Naive thymus-derived CD4-positive, alpha-beta T cell (primary cell): ENCODE measurements at regions of chr11 and their contacts with region 1.

Region 1: GRCh38 chr11:12813371-12814225 is 139.4 kb downstream of the TEAD1 start:
- DNase-seq: no peak
- ATAC-seq: no peak
- H3K4me3 ChIP-seq: no peak overlapping the region
- H3K4me3 Mint-ChIP-seq: peak overlapping the region in 1 of 10 donors; percentile 5
- H3K27ac ChIP-seq: no peak overlapping the region
- H3K27ac Mint-ChIP-seq: no peak overlapping the region
- H3K4me1 ChIP-seq: no peaks in the 10 kb centered on the region
- H3K4me1 Mint-ChIP-seq: peaks cover 0 to 62% (median 5%) of the 10 kb centered on the region in 7 donors
- H3K27me3 ChIP-seq: no peaks in the 10 kb centered on the region
- H3K27me3 Mint-ChIP-seq: peaks cover 28 to 40% (median 32%) of the 10 kb centered on the region in 5 donors

Region 2: DNA sequence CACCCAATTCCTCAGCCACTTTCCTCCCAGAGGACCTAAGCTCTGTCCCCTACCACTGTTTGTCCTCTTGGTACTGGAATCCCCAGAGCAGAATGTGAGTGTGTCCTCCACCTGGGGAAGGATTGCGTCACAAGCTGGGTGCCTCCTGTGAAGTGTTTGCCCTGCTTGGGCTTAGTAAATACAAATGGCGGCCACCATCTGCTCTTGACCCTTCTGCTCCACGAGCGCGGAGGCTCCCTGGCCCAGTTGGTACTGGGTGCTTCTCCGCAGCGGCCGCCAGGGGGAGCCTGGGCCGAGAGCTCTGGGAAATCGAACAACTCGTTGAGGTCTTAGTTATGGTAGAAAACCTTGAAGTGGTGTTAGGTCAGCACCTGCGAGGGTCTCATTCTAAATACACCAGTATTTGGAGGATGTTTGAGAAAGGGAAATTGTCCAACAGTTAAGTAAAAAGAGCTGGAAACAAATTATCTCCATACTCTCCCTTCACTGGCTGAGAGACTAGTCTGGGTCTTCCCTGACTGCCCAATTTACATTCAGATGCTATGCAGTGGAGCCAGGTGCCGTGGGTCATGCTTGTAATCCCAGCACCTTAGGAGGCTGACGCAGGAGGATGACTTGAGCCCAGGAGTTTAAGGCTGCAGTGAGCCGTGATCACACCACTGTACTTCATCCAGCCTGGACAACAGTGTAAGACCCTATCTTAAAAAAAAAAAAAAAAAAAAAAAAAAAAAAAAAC is 214.0 kb before region 1 on chr11:
- CTCF ChIA-PET with region 1: no interaction called
- POLR2A ChIA-PET with region 1: no interaction called
- intact Hi-C with region 1: loop called in 1 of 2 experiments (anchors 2 kb)
- DNase-seq: peak in 5 of 9 donors; percentile 8 to 57 (median 13)
- ATAC-seq: peak; percentile 26
- H3K4me3 ChIP-seq: no peak overlapping the region
- H3K4me3 Mint-ChIP-seq: no peak overlapping the region
- H3K27ac ChIP-seq: no peak overlapping the region
- H3K27ac Mint-ChIP-seq: peak overlapping the region in 1 of 9 donors; percentile 25
- H3K4me1 ChIP-seq: peaks cover 0 to 17% of the 10 kb centered on the region in 2 donors
- H3K4me1 Mint-ChIP-seq: peaks cover 3 to 25% (median 18%) of the 10 kb centered on the region in 7 donors
- H3K27me3 ChIP-seq: no peaks in the 10 kb centered on the region
- H3K27me3 Mint-ChIP-seq: peaks cover 16 to 45% (median 28%) of the 10 kb centered on the region in 5 donors

Region 3: GRCh38 chr11:12673924-12674570 is 139.6 kb before region 1 on chr11 and contains the start of gene TEAD1:
- CTCF ChIA-PET with region 1: no interaction called
- POLR2A ChIA-PET with region 1: no interaction called
- intact Hi-C with region 1: loop called in 1 of 2 experiments (anchors 2 kb)
- DNase-seq: peak; percentile 74 to 97 (median 81)
- ATAC-seq: peak; percentile 89
- H3K4me3 ChIP-seq: peak within 1 kb of the TSS; percentile 70
- H3K4me3 Mint-ChIP-seq: peak within 1 kb of the TSS; percentile 80 to 91 (median 85)
- H3K27ac ChIP-seq: no peak within 1 kb of the TSS
- H3K27ac Mint-ChIP-seq: peak within 1 kb of the TSS in 4 of 9 donors; percentile 29 to 77 (median 55)
- H3K4me1 ChIP-seq: peaks cover 5 to 6% of the 10 kb centered on the region in 2 donors
- H3K4me1 Mint-ChIP-seq: peaks cover 6 to 24% (median 9%) of the 10 kb centered on the region in 7 donors
- H3K27me3 ChIP-seq: peaks cover 5 to 50% of the 10 kb centered on the region in 2 donors
- H3K27me3 Mint-ChIP-seq: peaks cover 70 to 80% (median 75%) of the 10 kb centered on the region in 5 donors
- total RNA-seq, gene TEAD1: 0.07 to 0.22 TPM in 2 of 5 experiments, not detected in the others

Region 4: GRCh38 chr11:12717851-12718291 is 95.7 kb before region 1 on chr11:
- CTCF ChIA-PET with region 1: no interaction called
- POLR2A ChIA-PET with region 1: no interaction called
- intact Hi-C with region 1: no loop called
- DNase-seq: peak in 8 of 9 donors; percentile 43 to 78 (median 76)
- ATAC-seq: peak; percentile 91
- H3K4me3 ChIP-seq: no peak overlapping the region
- H3K4me3 Mint-ChIP-seq: peak overlapping the region in 9 of 10 donors; percentile 0 to 51 (median 20)
- H3K27ac ChIP-seq: no peak overlapping the region
- H3K27ac Mint-ChIP-seq: peak overlapping the region in 5 of 9 donors; percentile 17 to 83 (median 49)
- H3K4me1 ChIP-seq: peaks cover 7 to 17% of the 10 kb centered on the region in 2 donors
- H3K4me1 Mint-ChIP-seq: peaks cover 11 to 28% (median 17%) of the 10 kb centered on the region in 7 donors
- H3K27me3 ChIP-seq: peaks cover 4 to 10% of the 10 kb centered on the region in 2 donors
- H3K27me3 Mint-ChIP-seq: peaks cover 59 to 84% (median 73%) of the 10 kb centered on the region in 5 donors

Region 5: GRCh38 chr11:12802418-12803085 is 11.0 kb before region 1 on chr11:
- CTCF ChIA-PET with region 1: no interaction called
- POLR2A ChIA-PET with region 1: no interaction called
- intact Hi-C with region 1: no loop called
- DNase-seq: no peak
- ATAC-seq: no peak
- H3K4me3 ChIP-seq: no peak overlapping the region
- H3K4me3 Mint-ChIP-seq: no peak overlapping the region
- H3K27ac ChIP-seq: no peak overlapping the region
- H3K27ac Mint-ChIP-seq: no peak overlapping the region
- H3K4me1 ChIP-seq: no peaks in the 10 kb centered on the region
- H3K4me1 Mint-ChIP-seq: peaks cover 0 to 8% (median 0%) of the 10 kb centered on the region in 7 donors
- H3K27me3 ChIP-seq: peaks cover 0 to 5% of the 10 kb centered on the region in 2 donors
- H3K27me3 Mint-ChIP-seq: peaks cover 58 to 76% (median 65%) of the 10 kb centered on the region in 5 donors